GM10248 (cell line): ENCODE measurements at regions of chr6 and their contacts with region 1.

Region 1: GRCh38 chr6:47631269-47631772 is 67.1 kb upstream of the ADGRF4 start:
- DNase-seq: peak; percentile 37
- CTCF ChIP-seq: peak; percentile 27

Region 2: DNA sequence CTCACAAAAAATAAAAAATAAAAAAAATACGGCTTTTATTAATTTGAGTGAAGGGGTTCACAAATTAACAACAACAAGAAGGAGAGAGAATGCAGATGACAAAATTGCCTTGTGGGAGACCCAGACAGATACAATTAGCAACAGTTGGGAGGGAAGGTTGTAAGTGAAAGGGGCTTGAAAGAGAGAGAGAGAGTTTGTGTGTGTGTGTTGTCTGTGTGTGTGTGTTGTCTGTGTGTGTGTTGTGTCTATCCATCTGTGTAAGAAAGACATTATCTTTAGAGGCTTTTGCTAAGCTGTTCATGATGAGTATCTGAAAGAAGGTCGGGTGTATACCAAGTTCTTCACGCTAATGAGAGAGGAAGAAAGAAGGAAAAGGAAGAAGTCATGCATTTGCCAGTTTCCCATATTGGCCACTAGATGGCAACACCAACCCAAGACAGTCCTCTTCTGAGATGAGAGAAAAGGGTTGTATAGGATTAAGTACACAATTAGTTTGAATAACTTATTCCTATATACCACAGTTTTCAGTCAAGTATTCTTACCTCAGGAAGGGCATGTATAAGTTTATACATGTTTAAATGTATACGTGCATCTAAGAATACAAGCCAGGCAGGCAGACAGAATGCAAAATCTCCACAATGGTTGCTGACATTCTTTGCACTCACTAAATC is 217.4 kb before region 1 on chr6:
- CTCF ChIA-PET with region 1: interaction called, 27 read pairs
- POLR2A ChIA-PET with region 1: no interaction called
- DNase-seq: peak; percentile 57
- CTCF ChIP-seq: peak; percentile 88

Region 3: DNA sequence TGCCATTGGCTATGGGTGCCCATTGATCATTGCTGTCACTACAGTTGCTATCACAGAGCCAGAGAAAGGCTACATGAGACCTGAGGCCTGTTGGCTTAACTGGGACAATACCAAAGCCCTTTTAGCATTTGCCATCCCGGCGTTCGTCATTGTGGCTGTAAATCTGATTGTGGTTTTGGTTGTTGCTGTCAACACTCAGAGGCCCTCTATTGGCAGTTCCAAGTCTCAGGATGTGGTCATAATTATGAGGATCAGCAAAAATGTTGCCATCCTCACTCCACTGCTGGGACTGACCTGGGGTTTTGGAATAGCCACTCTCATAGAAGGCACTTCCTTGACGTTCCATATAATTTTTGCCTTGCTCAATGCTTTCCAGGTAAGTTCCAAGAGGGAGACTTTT is 83.5 kb after region 1 on chr6:
- CTCF ChIA-PET with region 1: interaction called, 10 read pairs
- POLR2A ChIA-PET with region 1: no interaction called
- DNase-seq: no peak
- CTCF ChIP-seq: no peak

Region 4: GRCh38 chr6:47733879-47734558 is 102.7 kb after region 1 on chr6:
- CTCF ChIA-PET with region 1: interaction called, 125 read pairs
- POLR2A ChIA-PET with region 1: no interaction called
- DNase-seq: peak; percentile 24
- CTCF ChIP-seq: peak; percentile 57

Region 5: GRCh38 chr6:47787620-47788497 is 156.5 kb after region 1 on chr6:
- CTCF ChIA-PET with region 1: interaction called, 106 read pairs
- POLR2A ChIA-PET with region 1: no interaction called
- DNase-seq: peak; percentile 52
- CTCF ChIP-seq: peak; percentile 95

Region 6: GRCh38 chr6:48378884-48379407 is 747.6 kb after region 1 on chr6:
- CTCF ChIA-PET with region 1: no interaction called
- POLR2A ChIA-PET with region 1: no interaction called
- DNase-seq: no peak
- CTCF ChIP-seq: no peak